ENCODE measurements at regions of chr11 and their contacts with region 1.

Region 1: GRCh38 chr11:3781423-3781822 is 15.9 kb downstream of the NUP98 start:
- H3K4me3 ChIP-seq: no peak overlapping the region
- H3K27ac ChIP-seq: no peak overlapping the region
- H3K4me1 ChIP-seq: no peaks in the 10 kb centered on the region; the same call in 1 of the 2 replicates
- CTCF ChIP-seq: no peak

Region 2: GRCh38 chr11:3797329-3798095 is 16.1 kb after region 1 on chr11 and contains the start of gene NUP98:
- CTCF ChIA-PET with region 1: interaction called, 5 read pairs
- POLR2A ChIA-PET with region 1: interaction called, 15 read pairs
- H3K4me3 ChIP-seq: peak within 1 kb of the TSS; percentile 68
- H3K27ac ChIP-seq: peak within 1 kb of the TSS; percentile 72
- H3K4me1 ChIP-seq: no peaks in the 10 kb centered on the region
- CTCF ChIP-seq: peak; percentile 50

Measured in HEK293 (cell line).